HAP-1 (cell line): ENCODE measurements at regions of chr5 and their contacts with region 1.

Region 1: GRCh38 chr5:153964880-153965645 is 73.6 kb downstream of the FAM114A2 start:
- DNase-seq: peak; percentile 55 to 72
- H3K4me3 ChIP-seq: no peak overlapping the region
- H3K4me1 ChIP-seq: no peaks in the 10 kb centered on the region
- H3K27me3 ChIP-seq: no peaks in the 10 kb centered on the region

Region 2: DNA sequence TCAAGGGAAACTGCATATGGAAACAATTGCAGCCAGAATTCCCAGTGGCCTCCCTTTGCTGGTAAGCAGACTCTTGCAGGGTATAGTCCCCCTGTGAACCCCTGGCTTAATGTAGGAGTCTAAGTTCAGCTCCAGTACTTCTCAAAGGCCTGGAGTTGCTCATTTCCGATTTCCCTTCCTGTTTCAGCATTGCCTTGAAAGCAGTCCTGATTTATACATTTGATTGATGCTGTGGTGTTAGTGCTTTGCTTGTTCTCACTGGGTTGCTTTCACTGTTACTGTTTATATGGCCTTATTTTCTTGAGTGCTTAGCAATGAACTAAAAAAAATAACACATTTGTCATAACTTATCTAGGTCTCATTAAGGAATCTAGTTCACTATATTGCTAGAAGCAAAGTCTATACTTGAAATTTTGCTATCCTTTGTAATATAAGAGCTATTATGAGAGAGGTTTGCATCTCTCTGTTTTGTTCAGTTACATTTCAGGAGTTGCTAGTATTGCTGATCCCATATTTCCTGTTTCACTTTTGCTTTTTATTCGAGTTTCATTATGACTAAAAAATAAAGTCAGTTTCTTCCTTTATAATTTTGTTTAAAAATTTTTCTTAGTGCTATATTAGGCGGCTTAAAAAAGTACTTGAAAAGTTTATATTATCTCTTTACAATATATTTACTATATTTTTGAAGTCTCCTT is 1437.6 kb before region 1 on chr5:
- in situ Hi-C with region 1: loop called (anchors 10 kb)
- DNase-seq: no peak
- H3K4me3 ChIP-seq: no peak overlapping the region
- H3K4me1 ChIP-seq: no peaks in the 10 kb centered on the region
- H3K27me3 ChIP-seq: no peaks in the 10 kb centered on the region; the same call in 1 of the 2 replicates

Region 3: GRCh38 chr5:154683101-154683880 is 718.2 kb after region 1 on chr5:
- in situ Hi-C with region 1: no loop called
- DNase-seq: no peak
- H3K4me3 ChIP-seq: peak overlapping the region; percentile 32
- H3K4me1 ChIP-seq: peaks cover 2% of the 10 kb centered on the region
- H3K27me3 ChIP-seq: no peaks in the 10 kb centered on the region